A549 (cell line): ENCODE measurements at regions of chr1 and their contacts with region 1.

Region 1: GRCh38 chr1:66503841-66504470 is 30.0 kb upstream of the SGIP1 start:
- DNase-seq: peak; percentile 7 to 66
- ATAC-seq: peak; percentile 85 to 89; a peak in 5 of 6 replicates
- H3K4me3 ChIP-seq: no peak overlapping the region
- H3K27ac ChIP-seq: no peak overlapping the region
- H3K4me1 ChIP-seq: no peaks in the 10 kb centered on the region
- CTCF ChIP-seq: peak; percentile 67
- EP300 ChIP-seq: no peak
- POLR2A ChIP-seq: no peak
- RAD21 ChIP-seq: peak; percentile 70 to 71

Region 2: GRCh38 chr1:66207484-66207883 is 296.5 kb before region 1 on chr1:
- CTCF ChIA-PET with region 1: no interaction called
- POLR2A ChIA-PET with region 1: no interaction called
- DNase-seq: peak; percentile 35 to 47
- ATAC-seq: peak in 1 of 2 experiments; percentile 72; a peak in 2 of 6 replicates
- H3K4me3 ChIP-seq: no peak overlapping the region
- H3K27ac ChIP-seq: peak overlapping the region; percentile 67 to 76; a peak in 5 of 6 replicates
- H3K4me1 ChIP-seq: peaks cover 65% of the 10 kb centered on the region
- CTCF ChIP-seq: no peak
- EP300 ChIP-seq: no peak
- POLR2A ChIP-seq: no peak
- RAD21 ChIP-seq: no peak

Region 3: GRCh38 chr1:66446261-66447001 is 57.5 kb before region 1 on chr1:
- CTCF ChIA-PET with region 1: interaction called, 36 read pairs
- POLR2A ChIA-PET with region 1: no interaction called
- DNase-seq: peak; percentile 25 to 68
- ATAC-seq: peak; percentile 68 to 87
- H3K4me3 ChIP-seq: no peak overlapping the region
- H3K27ac ChIP-seq: peak overlapping the region; percentile 67 to 83
- H3K4me1 ChIP-seq: peaks cover 27% of the 10 kb centered on the region
- CTCF ChIP-seq: peak; percentile 80
- EP300 ChIP-seq: no peak
- POLR2A ChIP-seq: no peak
- RAD21 ChIP-seq: peak; percentile 89 to 93

Region 4: GRCh38 chr1:66521721-66522365 is 17.9 kb after region 1 on chr1:
- CTCF ChIA-PET with region 1: interaction called, 10 read pairs
- POLR2A ChIA-PET with region 1: no interaction called
- DNase-seq: peak; percentile 14 to 30
- ATAC-seq: peak; percentile 80 to 91
- H3K4me3 ChIP-seq: no peak overlapping the region
- H3K27ac ChIP-seq: peak overlapping the region; percentile 39 to 59; a peak in 4 of 6 replicates
- H3K4me1 ChIP-seq: peaks cover 44% of the 10 kb centered on the region
- CTCF ChIP-seq: no peak
- EP300 ChIP-seq: no peak
- POLR2A ChIP-seq: no peak
- RAD21 ChIP-seq: no peak

Region 5: DNA sequence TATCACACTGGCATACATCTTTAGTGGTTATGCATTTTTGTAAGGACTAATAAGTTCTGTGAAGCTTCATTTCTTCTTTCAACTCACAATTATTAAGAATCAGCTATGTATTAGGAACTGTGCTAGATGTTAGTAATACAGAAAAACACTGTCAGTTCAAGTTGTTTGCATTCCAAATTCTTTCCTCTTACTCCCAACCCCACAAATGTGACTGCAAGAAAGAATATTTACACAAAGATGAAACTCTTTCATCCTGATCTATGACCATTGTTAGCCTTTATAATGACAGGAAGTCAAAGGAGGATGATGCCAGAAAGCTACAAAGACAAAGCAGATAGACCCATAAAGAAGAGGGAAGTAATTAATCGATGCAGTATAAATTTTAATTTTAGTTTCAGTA is 1160.1 kb after region 1 on chr1:
- CTCF ChIA-PET with region 1: no interaction called
- POLR2A ChIA-PET with region 1: no interaction called
- DNase-seq: no peak
- ATAC-seq: no peak
- H3K4me3 ChIP-seq: no peak overlapping the region
- H3K27ac ChIP-seq: peak overlapping the region in 1 of 2 experiments; percentile 5; a peak in 1 of 6 replicates
- H3K4me1 ChIP-seq: peaks cover 13% of the 10 kb centered on the region; the same call in 1 of the 3 replicates
- CTCF ChIP-seq: no peak
- EP300 ChIP-seq: no peak
- POLR2A ChIP-seq: no peak
- RAD21 ChIP-seq: no peak